ENCODE measurements at regions of chr9 and their contacts with region 1.

Region 1: GRCh38 chr9:20941174-20941690 is 90.2 kb downstream of the HACD4 start:
- DNase-seq: no peak
- ATAC-seq: peak; percentile 97
- H3K4me3 ChIP-seq: no peak overlapping the region
- H3K27ac ChIP-seq: no peak overlapping the region
- H3K4me1 ChIP-seq: no peaks in the 10 kb centered on the region
- H3K27me3 ChIP-seq: no peaks in the 10 kb centered on the region
- CTCF ChIP-seq: peak; percentile 88

Region 2: GRCh38 chr9:20356403-20357035 is 584.7 kb before region 1 on chr9:
- intact Hi-C with region 1: loop called (anchors 10 kb)
- DNase-seq: peak; percentile 65
- ATAC-seq: peak; percentile 87
- H3K4me3 ChIP-seq: peak overlapping the region; percentile 18
- H3K27ac ChIP-seq: no peak overlapping the region
- H3K4me1 ChIP-seq: peaks cover 11% of the 10 kb centered on the region
- H3K27me3 ChIP-seq: no peaks in the 10 kb centered on the region
- CTCF ChIP-seq: peak; percentile 68

Measured in upper lobe of right lung (tissue), 1 donor.